ENCODE measurements at regions of chr17 and their contacts with region 1.

Region 1: DNA sequence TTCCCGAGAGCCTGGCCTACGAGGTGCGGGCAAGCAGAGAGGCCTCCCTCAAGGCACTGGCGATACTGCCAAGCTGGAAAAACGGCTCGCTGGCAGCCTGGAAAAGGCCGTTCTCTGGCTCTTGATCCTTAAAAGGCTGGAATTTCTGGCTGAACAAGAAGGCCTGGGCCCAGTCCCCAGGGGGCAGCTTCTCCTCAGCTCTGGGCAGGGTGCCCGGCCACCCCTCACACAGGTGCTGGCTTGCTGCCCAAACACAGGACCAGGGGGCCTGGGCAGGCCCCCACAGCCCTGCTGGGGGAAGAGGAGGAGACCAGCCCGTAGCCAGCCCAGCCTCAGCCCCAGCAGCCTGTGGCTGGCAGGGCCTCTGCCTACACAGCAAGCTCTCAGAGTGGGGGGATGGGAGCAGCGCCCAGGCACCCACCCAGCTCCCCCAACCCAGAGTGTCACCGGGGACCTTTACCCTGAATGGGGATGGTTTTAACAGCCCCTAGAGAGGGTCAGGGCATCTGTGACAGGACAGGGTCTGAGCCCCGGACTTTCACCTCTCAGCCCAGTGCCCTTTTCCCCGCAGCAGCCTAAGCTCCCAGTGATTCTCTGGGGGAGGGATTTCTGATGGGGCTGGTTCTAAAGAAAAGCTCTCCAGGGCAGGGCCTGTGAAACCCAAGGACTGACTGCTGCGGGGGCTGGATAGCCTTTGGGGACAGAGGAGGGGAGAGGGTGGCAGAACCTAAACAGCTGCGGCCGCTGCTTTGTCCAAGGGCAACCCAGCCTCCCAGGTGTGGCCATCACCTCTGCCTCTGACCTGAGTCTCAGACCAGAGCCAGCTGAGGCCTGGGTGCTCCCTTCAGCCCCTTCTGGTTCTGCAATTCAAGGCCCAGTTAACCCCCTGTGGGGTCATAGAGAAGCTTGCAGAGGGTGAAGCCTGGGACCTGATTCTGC is 38.6 kb upstream of the TOB1 start:
- DNase-seq: no peak
- H3K4me3 Mint-ChIP-seq: no peak overlapping the region
- H3K27ac Mint-ChIP-seq: peak overlapping the region; percentile 85
- H3K4me1 Mint-ChIP-seq: peaks cover 70% of the 10 kb centered on the region
- H3K27me3 Mint-ChIP-seq: no peaks in the 10 kb centered on the region

Region 2: GRCh38 chr17:50547035-50547735 is 357.6 kb before region 1 on chr17 and contains the start of gene SPATA20:
- CTCF ChIA-PET with region 1: no interaction called
- POLR2A ChIA-PET with region 1: no interaction called
- DNase-seq: peak; percentile 90
- H3K4me3 Mint-ChIP-seq: peak within 1 kb of the TSS; percentile 73
- H3K27ac Mint-ChIP-seq: peak within 1 kb of the TSS; percentile 44
- H3K4me1 Mint-ChIP-seq: peaks cover 23% of the 10 kb centered on the region
- H3K27me3 Mint-ChIP-seq: peaks cover 19% of the 10 kb centered on the region
- total RNA-seq, gene SPATA20: 14.5 to 17.8 TPM

Region 3: DNA sequence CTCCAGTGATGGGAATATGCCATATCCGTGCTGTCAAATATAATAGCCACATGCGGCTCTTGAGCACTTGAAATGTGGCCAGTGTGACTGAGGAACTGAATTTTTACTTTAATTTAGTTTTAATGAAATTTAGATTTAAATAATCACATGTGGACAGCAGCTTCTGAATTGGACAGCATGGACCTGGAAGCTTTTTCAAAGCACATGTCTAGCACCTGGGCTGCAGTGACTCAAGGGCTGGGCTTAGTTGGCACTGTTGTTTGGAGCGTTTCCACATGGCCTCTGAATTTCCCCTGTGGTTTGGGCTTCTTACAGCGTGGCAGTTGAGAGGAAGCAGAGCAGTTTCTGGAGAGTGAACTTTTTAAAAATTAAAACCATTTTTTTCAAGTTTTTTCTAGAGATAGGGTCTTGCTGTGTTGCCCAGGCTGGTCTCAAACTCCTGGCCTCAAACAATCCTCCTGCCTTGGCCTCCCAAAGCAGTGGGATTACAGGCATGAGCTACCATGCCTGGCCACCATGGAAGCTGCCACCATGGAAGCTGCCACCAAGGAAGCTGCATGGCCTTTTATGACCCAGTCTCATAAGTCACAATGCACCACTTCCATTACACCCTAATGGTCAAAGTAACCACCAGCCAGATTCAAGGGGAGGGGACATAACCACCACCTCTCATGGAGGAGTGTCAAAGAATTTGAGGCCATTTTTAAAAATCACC is 31.9 kb before region 1 on chr17:
- CTCF ChIA-PET with region 1: interaction called, 30 read pairs
- POLR2A ChIA-PET with region 1: interaction called, 298 read pairs
- DNase-seq: peak; percentile 63
- H3K4me3 Mint-ChIP-seq: no peak overlapping the region
- H3K27ac Mint-ChIP-seq: peak overlapping the region; percentile 51
- H3K4me1 Mint-ChIP-seq: peaks cover 54% of the 10 kb centered on the region
- H3K27me3 Mint-ChIP-seq: peaks cover 12% of the 10 kb centered on the region

Region 4: DNA sequence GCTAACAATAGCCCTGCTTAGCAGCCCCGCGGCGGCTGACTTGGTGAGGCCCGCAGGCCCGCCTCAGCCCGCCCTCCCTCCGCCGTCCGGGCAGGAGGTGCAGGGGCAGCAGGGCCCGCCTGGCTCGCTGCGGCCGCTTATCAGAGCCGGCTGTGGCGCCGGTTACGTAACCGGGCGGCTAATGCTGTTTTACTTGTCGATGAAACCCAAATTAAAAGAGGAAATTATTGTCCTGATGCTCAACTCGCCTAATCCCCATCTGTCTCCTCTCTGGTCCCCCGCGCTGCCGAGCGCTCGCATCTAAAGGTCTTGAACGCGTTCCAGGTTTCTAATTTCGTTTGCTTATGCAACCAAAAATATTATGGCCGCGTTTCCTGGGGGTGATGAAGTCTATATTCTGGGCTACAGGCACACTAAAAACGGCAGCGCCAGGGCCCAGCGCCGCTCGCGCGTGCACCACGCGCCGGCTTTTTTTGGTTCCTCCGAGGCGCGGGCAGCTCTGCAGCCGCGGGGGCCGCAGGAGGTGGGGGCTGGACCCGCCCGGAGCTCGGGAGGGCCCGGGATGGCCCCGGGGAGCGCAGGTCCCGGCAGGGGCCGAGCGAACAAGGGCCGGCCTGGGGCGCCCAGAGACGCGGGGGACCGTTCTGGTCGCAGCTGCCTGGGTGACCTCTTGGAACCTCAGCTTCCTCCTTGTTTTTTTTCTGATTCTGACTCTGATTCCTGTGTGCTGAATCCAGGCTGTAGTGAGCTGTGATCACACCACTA is 26.5 kb after region 1 on chr17:
- CTCF ChIA-PET with region 1: interaction called, 5 read pairs
- POLR2A ChIA-PET with region 1: interaction called, 21 read pairs
- DNase-seq: peak; percentile 53
- H3K4me3 Mint-ChIP-seq: peak overlapping the region; percentile 68
- H3K27ac Mint-ChIP-seq: peak overlapping the region; percentile 47
- H3K4me1 Mint-ChIP-seq: peaks cover 39% of the 10 kb centered on the region
- H3K27me3 Mint-ChIP-seq: peaks cover 23% of the 10 kb centered on the region

Region 5: GRCh38 chr17:51000835-51001638 is 96.2 kb after region 1 on chr17:
- CTCF ChIA-PET with region 1: no interaction called
- POLR2A ChIA-PET with region 1: no interaction called
- DNase-seq: no peak
- H3K4me3 Mint-ChIP-seq: no peak overlapping the region
- H3K27ac Mint-ChIP-seq: no peak overlapping the region
- H3K4me1 Mint-ChIP-seq: no peaks in the 10 kb centered on the region
- H3K27me3 Mint-ChIP-seq: no peaks in the 10 kb centered on the region